ENCODE measurements at regions of chr19 and their contacts with region 1.

Region 1: GRCh38 chr19:40444192-40445028 is at the start of gene SERTAD3:
- DNase-seq: peak; percentile 97 to 99 (median 98)
- ATAC-seq: peak; percentile 68 to 86 (median 84)
- H3K4me3 ChIP-seq: peak within 1 kb of the TSS; percentile 62 to 99 (median 90)
- H3K27ac ChIP-seq: peak within 1 kb of the TSS; percentile 89 to 100 (median 98)
- H3K4me1 ChIP-seq: peaks cover 5 to 31% (median 23%) of the 10 kb centered on the region in 12 donors
- H3K27me3 ChIP-seq: no peaks in the 10 kb centered on the region
- CTCF ChIP-seq: peak in 6 of 12 donors; percentile 5 to 34 (median 22)
- POLR2A ChIP-seq: peak; percentile 89 to 95
- total RNA-seq, gene SERTAD3: 17.6 to 38.7 (median 26.0) TPM

Region 2: DNA sequence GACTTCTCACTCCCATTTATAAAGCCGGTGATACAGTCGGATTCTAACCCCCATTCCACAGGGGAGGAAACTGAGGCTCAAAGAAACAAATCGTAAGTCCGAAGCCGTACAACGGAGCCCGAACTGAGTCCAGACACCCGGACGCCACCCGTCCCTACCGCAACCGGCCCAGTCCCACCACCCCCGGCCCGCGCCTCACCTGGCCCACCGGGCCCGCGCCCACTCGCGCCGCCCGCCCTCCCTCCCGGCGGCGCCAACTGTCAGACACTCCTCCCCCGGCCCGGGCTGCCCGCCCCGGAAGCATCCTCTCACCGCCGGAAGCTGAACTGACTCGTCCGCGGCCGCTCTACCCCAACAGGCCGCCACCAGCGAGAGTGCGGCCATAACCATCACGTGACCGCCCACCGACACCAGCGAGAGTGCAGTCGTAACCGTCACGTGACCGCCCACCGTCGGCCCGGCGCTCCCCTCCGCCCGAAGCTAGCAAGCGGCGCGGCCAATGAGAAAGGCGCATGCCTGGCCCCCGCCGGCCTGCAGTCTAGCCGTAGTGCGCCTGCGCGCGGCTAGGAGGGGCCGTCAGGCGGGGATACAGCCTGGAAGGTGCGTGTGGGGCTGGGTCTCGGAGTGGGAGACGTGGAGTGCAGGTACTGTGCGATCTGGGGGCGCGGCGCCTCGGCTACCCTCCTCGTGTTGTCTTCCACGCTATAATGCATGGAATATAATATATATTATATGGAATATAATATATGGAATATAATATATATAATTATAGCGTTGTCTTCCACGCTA is 96.1 kb before region 1 on chr19 and contains the starts of genes C19orf47 and PLD3:
- intact Hi-C with region 1: loop called in 1 of 10 experiments (anchors 5 kb)
- DNase-seq: peak; percentile 100
- ATAC-seq: peak; percentile 97 to 98 (median 98)
- H3K4me3 ChIP-seq: peak within 1 kb of the TSS; percentile 59 to 98 (median 82)
- H3K27ac ChIP-seq: peak within 1 kb of the TSS; percentile 67 to 88 (median 84)
- H3K4me1 ChIP-seq: peaks cover 0 to 34% (median 20%) of the 10 kb centered on the region in 12 donors
- H3K27me3 ChIP-seq: no peaks in the 10 kb centered on the region
- CTCF ChIP-seq: no peak
- POLR2A ChIP-seq: peak in 1 of 2 donors; percentile 86
- total RNA-seq, gene C19orf47: 99.1 to 230 (median 148) TPM
- total RNA-seq, gene PLD3: 138 to 375 (median 183) TPM

Region 3: DNA sequence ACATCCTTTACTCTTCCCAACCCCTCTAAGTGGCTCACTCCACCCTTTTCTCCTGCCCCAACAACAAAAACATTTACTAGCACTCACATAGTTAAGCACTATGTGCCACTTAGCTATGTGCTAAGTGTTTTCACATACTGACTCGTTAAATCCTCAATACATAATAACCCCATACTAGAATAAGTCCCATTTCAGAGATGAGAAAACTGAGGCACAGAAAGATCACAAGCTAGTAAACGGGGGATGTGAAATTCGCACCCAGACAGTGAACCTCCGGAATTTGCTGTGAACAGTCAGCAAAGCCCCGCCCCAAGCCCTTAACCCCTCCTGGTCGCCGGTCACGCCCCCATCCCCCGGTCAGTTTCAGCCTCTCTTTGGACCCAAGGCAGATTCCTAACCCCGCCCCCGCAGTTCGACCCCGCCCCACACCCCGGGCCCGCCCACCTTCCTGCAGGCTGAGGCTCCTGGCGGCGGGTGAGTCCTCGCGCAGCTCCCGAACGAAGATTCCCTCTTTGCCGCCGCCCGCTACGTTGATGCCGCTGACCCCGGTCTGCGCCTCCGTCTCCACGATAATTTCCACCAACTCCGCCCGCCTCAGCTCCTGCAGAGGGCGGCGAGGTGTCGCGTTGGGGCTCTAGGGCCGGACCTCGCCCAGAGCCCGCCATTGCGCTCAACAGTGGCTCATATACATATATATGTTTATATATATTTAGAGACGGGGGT is 41.0 kb before region 1 on chr19:
- intact Hi-C with region 1: loop called in 1 of 10 experiments (anchors 1 kb)
- DNase-seq: peak; percentile 92 to 95 (median 93)
- ATAC-seq: peak; percentile 81 to 95 (median 90)
- H3K4me3 ChIP-seq: peak overlapping the region; percentile 32 to 81 (median 64)
- H3K27ac ChIP-seq: peak overlapping the region; percentile 80 to 93 (median 88)
- H3K4me1 ChIP-seq: peaks cover 0 to 26% (median 9%) of the 10 kb centered on the region in 12 donors
- H3K27me3 ChIP-seq: no peaks in the 10 kb centered on the region
- CTCF ChIP-seq: peak in 3 of 12 donors; percentile 10 to 28 (median 12)
- POLR2A ChIP-seq: no peak

Region 4: DNA sequence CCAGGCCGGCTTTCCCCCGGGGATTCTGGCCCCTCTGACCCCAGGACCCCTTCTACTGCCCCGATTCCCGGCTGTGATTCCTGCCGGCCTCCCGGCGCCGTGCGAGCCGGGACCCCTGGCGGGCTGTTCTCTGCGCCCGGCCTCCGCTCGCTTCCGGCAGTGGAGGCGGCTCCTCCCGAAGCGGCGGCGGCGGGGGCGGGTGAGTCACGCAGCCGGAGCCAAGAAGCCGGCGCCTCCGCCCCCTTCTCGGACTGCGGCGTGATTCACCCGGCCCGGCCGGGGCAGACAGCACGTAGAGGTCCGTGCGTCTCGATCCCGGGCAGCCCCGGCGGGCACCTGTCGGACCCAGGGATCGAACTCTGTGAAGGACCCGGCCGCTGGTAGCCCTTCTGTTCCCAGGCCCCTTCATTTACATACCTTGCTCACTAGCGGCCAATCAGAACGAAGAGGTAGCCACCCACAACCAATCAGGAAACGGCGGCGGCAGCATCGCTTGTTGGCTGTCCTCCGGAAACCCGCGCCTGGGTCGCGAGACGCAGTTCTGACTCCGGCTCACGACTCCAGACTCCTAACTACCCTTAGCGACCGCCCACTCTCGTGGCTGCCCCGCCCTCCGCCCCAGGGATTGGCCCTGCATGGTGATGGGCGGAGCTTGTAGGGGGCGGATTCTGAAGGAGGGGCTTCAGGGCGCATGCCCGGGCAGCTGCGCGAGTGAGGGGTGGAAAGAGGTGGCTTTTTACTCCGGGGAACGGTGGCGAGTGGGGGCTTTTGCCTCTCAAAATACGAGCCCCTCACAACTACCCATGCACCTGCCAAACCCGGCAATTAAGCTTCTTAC is 18.7 kb before region 1 on chr19 and contains the start of gene SERTAD1:
- intact Hi-C with region 1: loop called in 7 of 10 experiments (anchors 1 to 2 kb)
- DNase-seq: peak; percentile 100
- ATAC-seq: peak; percentile 91 to 97 (median 94)
- H3K4me3 ChIP-seq: peak within 1 kb of the TSS; percentile 58 to 98 (median 91)
- H3K27ac ChIP-seq: peak within 1 kb of the TSS; percentile 92 to 100 (median 99)
- H3K4me1 ChIP-seq: peaks cover 0 to 44% (median 32%) of the 10 kb centered on the region in 12 donors
- H3K27me3 ChIP-seq: no peaks in the 10 kb centered on the region
- CTCF ChIP-seq: peak in 11 of 12 donors; percentile 69 to 95 (median 81)
- POLR2A ChIP-seq: peak; percentile 89 to 100
- total RNA-seq, gene SERTAD1: 7.6 to 28.0 (median 11.5) TPM

Region 5: GRCh38 chr19:40433391-40434216 is 10.8 kb before region 1 on chr19:
- intact Hi-C with region 1: loop called in 1 of 10 experiments (anchors 1 kb)
- DNase-seq: peak; percentile 92 to 95 (median 94)
- ATAC-seq: peak; percentile 94 to 99 (median 98)
- H3K4me3 ChIP-seq: peak overlapping the region; percentile 5 to 67 (median 54)
- H3K27ac ChIP-seq: peak overlapping the region; percentile 90 to 99 (median 96)
- H3K4me1 ChIP-seq: peaks cover 0 to 32% (median 20%) of the 10 kb centered on the region in 12 donors
- H3K27me3 ChIP-seq: no peaks in the 10 kb centered on the region
- CTCF ChIP-seq: no peak
- POLR2A ChIP-seq: peak in 1 of 2 donors; percentile 52

Region 6: GRCh38 chr19:40465557-40466150 is 21.2 kb after region 1 on chr19 and contains the start of gene BLVRB:
- intact Hi-C with region 1: loop called in 2 of 10 experiments (anchors 1 kb)
- DNase-seq: peak; percentile 99 to 100 (median 99)
- ATAC-seq: peak; percentile 96 to 97 (median 97)
- H3K4me3 ChIP-seq: peak within 1 kb of the TSS; percentile 50 to 85 (median 78)
- H3K27ac ChIP-seq: peak within 1 kb of the TSS; percentile 28 to 96 (median 86)
- H3K4me1 ChIP-seq: peaks cover 0 to 55% (median 19%) of the 10 kb centered on the region in 12 donors
- H3K27me3 ChIP-seq: peaks cover 0 to 12% (median 0%) of the 10 kb centered on the region in 9 donors
- CTCF ChIP-seq: no peak
- POLR2A ChIP-seq: peak; percentile 28 to 90
- total RNA-seq, gene BLVRB: 76.3 to 330 (median 100) TPM